SK-N-SH (cell line): ENCODE measurements at regions of chr14 and their contacts with region 1.

Region 1: GRCh38 chr14:59897761-59898383 is 22.1 kb upstream of the LRRC9 start:
- DNase-seq: peak; percentile 51
- H3K4me3 ChIP-seq: no peak overlapping the region; a peak in 1 of 4 replicates
- H3K27ac ChIP-seq: no peak overlapping the region
- H3K4me1 ChIP-seq: no peaks in the 10 kb centered on the region
- H3K27me3 ChIP-seq: no peaks in the 10 kb centered on the region
- CTCF ChIP-seq: peak; percentile 50
- EP300 ChIP-seq: no peak
- RAD21 ChIP-seq: peak; percentile 91

Region 2: DNA sequence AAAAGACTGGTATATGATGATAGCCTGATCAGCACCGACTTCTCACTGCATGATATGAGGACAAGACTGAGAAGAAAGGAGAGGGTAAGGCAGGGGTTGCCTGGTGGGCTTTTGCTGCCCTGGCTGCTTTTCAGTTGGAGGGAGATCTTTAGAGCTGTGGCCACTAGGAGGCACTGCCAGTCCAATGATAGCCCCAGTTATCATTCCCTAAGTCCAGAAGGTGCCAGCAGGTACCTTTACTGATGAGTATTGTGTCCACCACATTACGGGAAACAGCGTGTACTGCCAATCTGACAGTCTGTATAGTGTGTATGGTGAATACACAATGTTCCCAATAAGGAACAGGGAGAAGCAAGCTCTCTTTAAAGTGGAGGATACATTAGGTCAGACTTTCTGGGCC is 265.5 kb before region 1 on chr14:
- CTCF ChIA-PET with region 1: interaction called, 35 read pairs
- POLR2A ChIA-PET with region 1: no interaction called
- DNase-seq: peak; percentile 58
- H3K4me3 ChIP-seq: no peak overlapping the region
- H3K27ac ChIP-seq: no peak overlapping the region
- H3K4me1 ChIP-seq: no peaks in the 10 kb centered on the region; a peak in 3 of 4 replicates
- H3K27me3 ChIP-seq: peaks cover 19% of the 10 kb centered on the region; the same call in 1 of the 2 replicates
- CTCF ChIP-seq: peak; percentile 67
- EP300 ChIP-seq: no peak
- RAD21 ChIP-seq: peak; percentile 75

Region 3: DNA sequence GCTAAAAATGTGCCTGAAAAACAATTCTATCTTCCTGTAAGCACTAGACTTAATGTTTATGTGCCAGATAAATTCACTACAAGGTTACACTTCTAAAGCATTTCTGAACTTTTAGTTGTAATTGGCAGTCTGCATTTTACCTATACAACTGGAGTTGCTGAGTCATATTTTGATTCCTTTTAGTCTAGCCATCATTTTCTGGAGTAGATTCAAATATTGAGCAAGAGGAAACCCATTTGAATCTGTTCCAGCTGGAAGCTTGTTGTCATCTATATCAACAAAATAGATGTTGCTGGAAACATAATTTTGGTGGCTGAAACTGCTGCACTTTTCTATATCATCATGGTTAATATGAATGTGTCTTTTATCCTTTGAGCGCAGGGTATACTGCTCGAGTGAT is 199.1 kb before region 1 on chr14:
- CTCF ChIA-PET with region 1: interaction called, 38 read pairs
- POLR2A ChIA-PET with region 1: no interaction called
- DNase-seq: no peak
- H3K4me3 ChIP-seq: no peak overlapping the region
- H3K27ac ChIP-seq: no peak overlapping the region
- H3K4me1 ChIP-seq: no peaks in the 10 kb centered on the region
- H3K27me3 ChIP-seq: no peaks in the 10 kb centered on the region
- CTCF ChIP-seq: no peak
- EP300 ChIP-seq: no peak
- RAD21 ChIP-seq: no peak

Region 4: GRCh38 chr14:59728321-59728720 is 169.6 kb before region 1 on chr14:
- CTCF ChIA-PET with region 1: interaction called, 14 read pairs
- POLR2A ChIA-PET with region 1: no interaction called
- DNase-seq: peak; percentile 58
- H3K4me3 ChIP-seq: no peak overlapping the region
- H3K27ac ChIP-seq: no peak overlapping the region
- H3K4me1 ChIP-seq: peaks cover 0 to 4% of the 10 kb centered on the region in 2 experiments; a peak in 1 of 4 replicates
- H3K27me3 ChIP-seq: no peaks in the 10 kb centered on the region
- CTCF ChIP-seq: no peak
- EP300 ChIP-seq: no peak
- RAD21 ChIP-seq: no peak

Region 5: GRCh38 chr14:59882957-59883356 is 14.9 kb before region 1 on chr14:
- CTCF ChIA-PET with region 1: interaction called, 22 read pairs
- POLR2A ChIA-PET with region 1: no interaction called
- DNase-seq: no peak
- H3K4me3 ChIP-seq: no peak overlapping the region
- H3K27ac ChIP-seq: no peak overlapping the region
- H3K4me1 ChIP-seq: no peaks in the 10 kb centered on the region
- H3K27me3 ChIP-seq: no peaks in the 10 kb centered on the region
- CTCF ChIP-seq: peak; percentile 40
- EP300 ChIP-seq: no peak
- RAD21 ChIP-seq: no peak

Region 6: GRCh38 chr14:59918824-59919569 is 21.1 kb after region 1 on chr14:
- CTCF ChIA-PET with region 1: interaction called, 17 read pairs
- POLR2A ChIA-PET with region 1: no interaction called
- DNase-seq: peak; percentile 56
- H3K4me3 ChIP-seq: peak overlapping the region; percentile 49 to 59
- H3K27ac ChIP-seq: no peak overlapping the region
- H3K4me1 ChIP-seq: peaks cover 4% of the 10 kb centered on the region in 2 experiments; a peak in 2 of 4 replicates
- H3K27me3 ChIP-seq: no peaks in the 10 kb centered on the region
- CTCF ChIP-seq: peak; percentile 65
- EP300 ChIP-seq: no peak
- RAD21 ChIP-seq: peak; percentile 58